MCF 10A (cell line): ENCODE measurements at regions of chr1 and their contacts with region 1.

Region 1: GRCh38 chr1:30379684-30380624 is 343.4 kb downstream of the MATN1 start:
- DNase-seq: peak; percentile 78
- H3K4me3 Mint-ChIP-seq: no peak overlapping the region
- H3K27ac Mint-ChIP-seq: no peak overlapping the region
- H3K4me1 Mint-ChIP-seq: peaks cover 12% of the 10 kb centered on the region
- H3K27me3 Mint-ChIP-seq: peaks cover 46% of the 10 kb centered on the region
- CTCF ChIP-seq: peak; percentile 69

Region 2: GRCh38 chr1:29849038-29849750 is 530.8 kb before region 1 on chr1:
- CTCF ChIA-PET with region 1: no interaction called
- POLR2A ChIA-PET with region 1: no interaction called
- intact Hi-C with region 1: no loop called
- DNase-seq: peak; percentile 62
- H3K4me3 Mint-ChIP-seq: no peak overlapping the region
- H3K27ac Mint-ChIP-seq: no peak overlapping the region
- H3K4me1 Mint-ChIP-seq: no peaks in the 10 kb centered on the region
- H3K27me3 Mint-ChIP-seq: peaks cover 67% of the 10 kb centered on the region
- CTCF ChIP-seq: peak; percentile 51

Region 3: DNA sequence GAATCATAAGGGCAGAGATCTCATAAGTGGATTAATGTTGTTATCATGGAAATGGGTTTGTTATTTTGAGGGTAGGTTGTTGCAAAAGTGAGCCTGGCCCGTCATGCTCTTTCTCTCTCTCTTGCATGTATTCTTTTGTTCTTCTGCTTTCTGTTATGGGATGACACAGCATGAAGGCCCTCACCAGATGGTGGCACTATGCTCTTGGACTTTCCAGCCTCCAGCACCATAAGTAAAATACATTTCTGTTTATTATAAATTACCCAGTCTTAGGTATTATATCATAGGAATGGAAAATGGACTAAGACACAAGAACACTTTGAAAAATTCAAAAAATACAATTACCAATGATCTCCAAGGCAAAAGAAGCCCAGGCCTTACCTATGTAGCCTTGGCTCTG is 467.5 kb before region 1 on chr1:
- CTCF ChIA-PET with region 1: interaction called, 4 read pairs
- POLR2A ChIA-PET with region 1: no interaction called
- intact Hi-C with region 1: loop called (anchors 1 kb)
- DNase-seq: peak; percentile 53
- H3K4me3 Mint-ChIP-seq: no peak overlapping the region
- H3K27ac Mint-ChIP-seq: no peak overlapping the region
- H3K4me1 Mint-ChIP-seq: no peaks in the 10 kb centered on the region
- H3K27me3 Mint-ChIP-seq: peaks cover 38% of the 10 kb centered on the region
- CTCF ChIP-seq: peak; percentile 36

Region 4: GRCh38 chr1:30353637-30354036 is 26.3 kb before region 1 on chr1:
- CTCF ChIA-PET with region 1: interaction called, 14 read pairs
- POLR2A ChIA-PET with region 1: no interaction called
- intact Hi-C with region 1: no loop called
- DNase-seq: peak; percentile 9
- H3K4me3 Mint-ChIP-seq: no peak overlapping the region
- H3K27ac Mint-ChIP-seq: no peak overlapping the region
- H3K4me1 Mint-ChIP-seq: no peaks in the 10 kb centered on the region
- H3K27me3 Mint-ChIP-seq: peaks cover 69% of the 10 kb centered on the region
- CTCF ChIP-seq: no peak

Region 5: GRCh38 chr1:30362603-30362990 is 17.4 kb before region 1 on chr1:
- CTCF ChIA-PET with region 1: interaction called, 14 read pairs
- POLR2A ChIA-PET with region 1: no interaction called
- intact Hi-C with region 1: no loop called
- DNase-seq: no peak
- H3K4me3 Mint-ChIP-seq: no peak overlapping the region
- H3K27ac Mint-ChIP-seq: no peak overlapping the region
- H3K4me1 Mint-ChIP-seq: no peaks in the 10 kb centered on the region
- H3K27me3 Mint-ChIP-seq: peaks cover 15% of the 10 kb centered on the region
- CTCF ChIP-seq: no peak

Region 6: GRCh38 chr1:30511991-30512913 is 132.3 kb after region 1 on chr1:
- CTCF ChIA-PET with region 1: no interaction called
- POLR2A ChIA-PET with region 1: no interaction called
- intact Hi-C with region 1: no loop called
- DNase-seq: peak; percentile 27
- H3K4me3 Mint-ChIP-seq: no peak overlapping the region
- H3K27ac Mint-ChIP-seq: no peak overlapping the region
- H3K4me1 Mint-ChIP-seq: peaks cover 16% of the 10 kb centered on the region
- H3K27me3 Mint-ChIP-seq: peaks cover 11% of the 10 kb centered on the region
- CTCF ChIP-seq: no peak